Endothelial cell of umbilical vein (primary cell): ENCODE measurements at regions of chr15 and their contacts with region 1.

Region 1: GRCh38 chr15:40367686-40368611 is 9.9 kb downstream of the DISP2 start:
- DNase-seq: peak; percentile 85
- H3K4me3 ChIP-seq: peak overlapping the region in 2 of 3 experiments; percentile 15 to 22
- H3K27ac ChIP-seq: no peak overlapping the region
- H3K4me1 ChIP-seq: peaks cover 10% of the 10 kb centered on the region
- H3K27me3 ChIP-seq: no peaks in the 10 kb centered on the region
- CTCF ChIP-seq: peak; percentile 86 to 98
- POLR2A ChIP-seq: no peak

Region 2: GRCh38 chr15:40029979-40030893 is 337.7 kb before region 1 on chr15:
- CTCF ChIA-PET with region 1: no interaction called
- POLR2A ChIA-PET with region 1: no interaction called
- dilution Hi-C with region 1: no loop called
- intact Hi-C with region 1: no loop called
- DNase-seq: peak; percentile 25
- H3K4me3 ChIP-seq: no peak overlapping the region
- H3K27ac ChIP-seq: peak overlapping the region; percentile 64
- H3K4me1 ChIP-seq: peaks cover 28% of the 10 kb centered on the region
- H3K27me3 ChIP-seq: no peaks in the 10 kb centered on the region
- CTCF ChIP-seq: peak; percentile 46 to 55
- POLR2A ChIP-seq: no peak

Region 3: GRCh38 chr15:40357723-40358470 is 10.1 kb before region 1 on chr15 and contains the start of gene DISP2:
- CTCF ChIA-PET with region 1: interaction called, 8 read pairs
- POLR2A ChIA-PET with region 1: no interaction called
- dilution Hi-C with region 1: no loop called
- intact Hi-C with region 1: loop called (anchors 1 kb)
- DNase-seq: peak; percentile 84
- H3K4me3 ChIP-seq: peak within 1 kb of the TSS; percentile 35 to 54 (median 41)
- H3K27ac ChIP-seq: no peak within 1 kb of the TSS
- H3K4me1 ChIP-seq: peaks cover 8% of the 10 kb centered on the region
- H3K27me3 ChIP-seq: peaks cover 9 to 13% of the 10 kb centered on the region in 2 experiments
- CTCF ChIP-seq: no peak
- POLR2A ChIP-seq: no peak
- total RNA-seq, gene DISP2: 0.65 and 1.2 TPM in 2 replicates

Region 4: GRCh38 chr15:40382580-40383456 is 14.9 kb after region 1 on chr15 and contains the start of gene KNSTRN:
- CTCF ChIA-PET with region 1: interaction called, 9 read pairs
- POLR2A ChIA-PET with region 1: no interaction called
- dilution Hi-C with region 1: no loop called
- intact Hi-C with region 1: loop called (anchors 2 kb)
- DNase-seq: peak; percentile 87
- H3K4me3 ChIP-seq: peak within 1 kb of the TSS; percentile 78 to 93 (median 87)
- H3K27ac ChIP-seq: peak within 1 kb of the TSS; percentile 6
- H3K4me1 ChIP-seq: peaks cover 19% of the 10 kb centered on the region
- H3K27me3 ChIP-seq: no peaks in the 10 kb centered on the region
- CTCF ChIP-seq: no peak
- POLR2A ChIP-seq: peak; percentile 18
- total RNA-seq, gene KNSTRN: 54.9 and 61.4 TPM in 2 replicates

Region 5: GRCh38 chr15:40405501-40406381 is 37.8 kb after region 1 on chr15 and contains the start of gene IVD:
- CTCF ChIA-PET with region 1: interaction called, 6 read pairs
- POLR2A ChIA-PET with region 1: interaction called, 3 read pairs
- dilution Hi-C with region 1: no loop called
- intact Hi-C with region 1: loop called (anchors 5 kb)
- DNase-seq: peak; percentile 97
- H3K4me3 ChIP-seq: peak within 1 kb of the TSS; percentile 47 to 87 (median 74)
- H3K27ac ChIP-seq: peak within 1 kb of the TSS; percentile 9
- H3K4me1 ChIP-seq: peaks cover 11% of the 10 kb centered on the region
- H3K27me3 ChIP-seq: no peaks in the 10 kb centered on the region
- CTCF ChIP-seq: no peak
- POLR2A ChIP-seq: peak; percentile 80
- total RNA-seq, gene IVD: 62.5 and 64.3 TPM in 2 replicates

Region 6: DNA sequence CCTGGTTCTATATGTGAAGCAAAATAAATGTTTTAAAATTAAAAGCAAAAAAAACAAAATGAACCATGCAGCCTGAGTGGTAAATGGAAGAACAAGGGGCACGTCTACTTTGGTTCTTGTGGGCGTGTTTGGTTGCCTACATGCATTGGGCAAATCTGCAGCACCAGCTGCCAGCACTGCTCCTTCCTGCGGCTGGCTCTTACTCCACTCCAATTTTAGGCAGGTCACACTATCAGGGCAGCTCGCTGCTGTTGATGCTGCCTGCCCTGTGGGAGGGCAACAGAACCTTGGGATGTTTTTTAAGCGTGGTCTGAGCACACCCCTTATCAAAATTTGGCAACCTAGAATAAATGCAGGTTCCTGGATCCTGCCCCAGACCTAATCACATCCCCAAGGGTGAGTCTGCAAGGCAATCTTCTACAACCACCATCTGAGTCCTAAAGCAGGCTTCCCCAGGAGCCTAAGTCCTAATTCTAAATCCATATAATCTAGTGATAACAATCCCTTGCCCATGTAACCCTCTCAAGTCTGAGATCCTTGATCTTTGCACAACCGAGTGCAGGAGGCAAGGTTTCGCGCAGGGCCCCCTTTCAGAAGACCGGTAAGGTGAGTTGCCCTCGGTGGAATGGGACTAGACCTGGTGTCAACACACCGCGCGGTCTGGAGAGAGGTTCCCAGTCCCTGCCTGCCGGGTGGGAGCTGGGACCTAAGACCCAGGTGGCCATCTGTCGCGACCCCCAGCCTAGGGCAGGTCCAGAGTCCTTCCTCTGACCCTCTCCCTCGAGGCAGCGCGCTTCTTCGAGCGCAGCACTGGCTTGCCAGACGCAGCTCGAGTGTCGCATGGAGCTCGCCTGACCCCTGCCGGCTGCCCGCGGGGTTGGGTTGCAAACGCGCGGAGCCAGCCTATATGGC is 53.6 kb after region 1 on chr15:
- CTCF ChIA-PET with region 1: interaction called, 38 read pairs
- POLR2A ChIA-PET with region 1: interaction called, 6 read pairs
- dilution Hi-C with region 1: no loop called
- intact Hi-C with region 1: loop called (anchors 1 kb)
- DNase-seq: peak; percentile 61
- H3K4me3 ChIP-seq: no peak overlapping the region
- H3K27ac ChIP-seq: no peak overlapping the region
- H3K4me1 ChIP-seq: no peaks in the 10 kb centered on the region
- H3K27me3 ChIP-seq: no peaks in the 10 kb centered on the region
- CTCF ChIP-seq: peak; percentile 89 to 99
- POLR2A ChIP-seq: peak; percentile 34

Region 7: DNA sequence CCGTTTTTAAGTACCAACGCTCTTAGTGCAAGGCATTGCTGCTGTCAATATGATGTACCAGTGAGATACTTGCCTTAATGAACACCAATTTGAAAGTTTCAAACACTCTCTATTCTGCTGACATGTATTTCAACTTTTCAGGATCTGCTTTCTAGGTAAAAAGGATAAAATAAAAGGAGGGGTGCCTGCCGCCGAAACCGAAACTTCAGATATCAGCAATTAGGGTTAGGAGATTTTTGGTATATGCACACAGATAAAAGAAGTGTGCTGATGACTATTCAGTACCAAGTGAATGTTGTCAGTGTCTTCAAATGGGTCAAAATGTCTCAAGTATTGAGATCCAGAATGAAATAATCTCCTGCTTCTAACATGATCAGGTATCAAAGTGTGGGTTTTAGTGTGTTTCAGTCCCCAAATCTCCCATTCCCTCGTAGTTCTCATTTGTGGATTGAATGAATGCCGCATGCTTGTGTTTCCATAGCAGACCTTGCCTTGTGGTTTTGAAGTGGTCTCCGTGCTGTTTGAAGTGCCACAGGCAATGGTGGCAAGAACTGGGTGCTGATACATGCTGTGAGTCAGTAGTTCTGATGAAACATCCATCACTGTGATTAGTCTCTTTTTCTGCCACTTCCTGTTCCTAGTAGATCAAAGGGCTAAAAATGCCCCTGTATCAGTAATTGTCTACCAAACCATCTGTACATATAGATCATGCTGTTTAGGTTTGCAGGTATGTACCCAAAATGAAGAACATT is 125.3 kb after region 1 on chr15:
- CTCF ChIA-PET with region 1: no interaction called
- POLR2A ChIA-PET with region 1: no interaction called
- dilution Hi-C with region 1: no loop called
- intact Hi-C with region 1: no loop called
- DNase-seq: no peak
- H3K4me3 ChIP-seq: no peak overlapping the region
- H3K27ac ChIP-seq: no peak overlapping the region
- H3K4me1 ChIP-seq: no peaks in the 10 kb centered on the region
- H3K27me3 ChIP-seq: peaks cover 5 to 13% of the 10 kb centered on the region in 2 experiments
- CTCF ChIP-seq: no peak
- POLR2A ChIP-seq: no peak

Region 8: GRCh38 chr15:40506964-40507571 is 139.1 kb after region 1 on chr15:
- CTCF ChIA-PET with region 1: interaction called, 3 read pairs
- POLR2A ChIA-PET with region 1: no interaction called
- dilution Hi-C with region 1: no loop called
- intact Hi-C with region 1: loop called (anchors 5 kb)
- DNase-seq: peak; percentile 76
- H3K4me3 ChIP-seq: peak overlapping the region in 2 of 3 experiments; percentile 11 to 51
- H3K27ac ChIP-seq: no peak overlapping the region
- H3K4me1 ChIP-seq: no peaks in the 10 kb centered on the region
- H3K27me3 ChIP-seq: peaks cover 0 to 3% of the 10 kb centered on the region in 2 experiments
- CTCF ChIP-seq: peak; percentile 64 to 83
- POLR2A ChIP-seq: no peak